Activated naive CD4-positive, alpha-beta T cell treated with anti-CD3 and anti-CD28 coated beads for 36 hours (primary cell): ENCODE measurements at regions of chr22 and their contacts with region 1.

Region 1: DNA sequence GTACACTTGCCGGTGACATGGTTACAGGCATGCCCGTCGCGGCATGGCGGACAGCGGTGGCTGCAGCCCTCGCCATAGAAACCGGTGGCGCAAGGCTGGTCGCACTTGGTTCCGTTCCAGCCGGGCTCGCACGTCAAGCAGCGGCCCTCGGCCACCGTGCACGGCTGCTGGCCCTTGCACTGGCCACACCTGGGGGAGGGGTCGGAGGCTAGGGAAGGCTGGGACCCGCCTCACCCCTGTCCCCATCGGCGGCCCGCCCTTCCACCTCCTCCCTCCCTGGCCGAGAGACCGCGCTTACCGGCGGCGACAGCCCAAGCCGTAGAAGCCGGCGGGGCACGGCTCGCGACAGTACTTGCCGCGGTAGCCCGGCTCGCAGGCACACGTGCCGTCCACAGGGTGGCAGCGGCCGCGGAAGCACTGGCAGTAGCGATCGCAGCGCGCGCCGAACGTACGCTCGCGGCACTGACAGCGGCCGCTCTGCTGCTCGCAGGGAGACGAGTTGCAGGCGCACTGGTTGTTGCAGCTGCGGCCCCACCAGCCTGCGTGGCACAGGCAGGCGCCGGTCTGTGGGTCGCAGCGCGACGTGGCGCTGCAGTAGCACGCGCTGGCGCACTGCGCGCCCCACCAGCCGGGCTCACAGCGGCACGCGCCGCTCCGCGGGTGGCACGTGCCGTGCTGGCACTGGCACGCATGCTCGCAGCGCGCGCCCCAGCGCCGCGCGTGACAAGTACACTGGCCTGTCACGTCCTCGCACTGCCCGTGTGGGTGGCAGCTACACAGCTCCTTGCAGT is 6.7 kb downstream of the SCARF2 start:
- DNase-seq: peak; percentile 59
- H3K4me3 Mint-ChIP-seq: peak overlapping the region; percentile 63
- H3K27ac Mint-ChIP-seq: no peak overlapping the region
- H3K4me1 Mint-ChIP-seq: peaks cover 18% of the 10 kb centered on the region
- H3K27me3 Mint-ChIP-seq: peaks cover 58% of the 10 kb centered on the region

Region 2: GRCh38 chr22:20408891-20409290 is 22.0 kb before region 1 on chr22:
- CTCF ChIA-PET with region 1: no interaction called
- intact Hi-C with region 1: no loop called
- DNase-seq: no peak
- H3K4me3 Mint-ChIP-seq: no peak overlapping the region
- H3K27ac Mint-ChIP-seq: no peak overlapping the region
- H3K4me1 Mint-ChIP-seq: no peaks in the 10 kb centered on the region
- H3K27me3 Mint-ChIP-seq: no peaks in the 10 kb centered on the region

Region 3: DNA sequence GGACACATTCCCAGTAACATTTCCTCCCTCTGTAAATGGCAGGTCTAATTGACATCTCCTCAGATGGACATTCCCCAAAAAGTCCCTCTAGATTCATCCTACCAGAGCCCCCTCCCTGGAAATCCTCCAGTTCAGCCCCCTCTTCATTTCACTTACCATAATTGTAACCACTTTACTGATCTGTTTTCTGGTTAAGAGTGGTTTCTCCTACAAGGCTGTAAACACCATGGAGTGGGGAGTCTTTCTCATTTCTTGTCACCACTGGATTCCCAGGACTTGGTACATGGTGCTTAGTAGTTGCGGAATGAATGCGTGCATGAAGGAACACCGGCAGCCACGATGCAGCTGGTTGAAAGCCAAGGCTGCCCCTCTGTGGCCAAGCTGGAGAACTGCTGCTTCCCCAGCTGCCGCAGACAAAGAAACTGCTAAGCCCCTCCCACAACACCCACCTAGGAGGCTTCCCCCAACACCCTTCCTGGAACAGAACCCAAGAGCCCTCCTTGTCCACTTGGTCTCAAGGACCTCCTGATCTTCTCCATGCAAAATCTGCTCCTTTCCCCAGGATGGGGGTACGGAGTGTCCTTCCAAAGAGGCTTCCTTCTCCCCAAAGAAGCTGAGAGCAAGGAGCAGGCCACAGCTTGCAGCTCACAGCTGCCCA is 25.3 kb after region 1 on chr22:
- CTCF ChIA-PET with region 1: interaction called, 3 read pairs
- intact Hi-C with region 1: loop called (anchors 1 kb)
- DNase-seq: peak; percentile 84
- H3K4me3 Mint-ChIP-seq: no peak overlapping the region
- H3K27ac Mint-ChIP-seq: no peak overlapping the region
- H3K4me1 Mint-ChIP-seq: peaks cover 23% of the 10 kb centered on the region
- H3K27me3 Mint-ChIP-seq: no peaks in the 10 kb centered on the region

Region 4: DNA sequence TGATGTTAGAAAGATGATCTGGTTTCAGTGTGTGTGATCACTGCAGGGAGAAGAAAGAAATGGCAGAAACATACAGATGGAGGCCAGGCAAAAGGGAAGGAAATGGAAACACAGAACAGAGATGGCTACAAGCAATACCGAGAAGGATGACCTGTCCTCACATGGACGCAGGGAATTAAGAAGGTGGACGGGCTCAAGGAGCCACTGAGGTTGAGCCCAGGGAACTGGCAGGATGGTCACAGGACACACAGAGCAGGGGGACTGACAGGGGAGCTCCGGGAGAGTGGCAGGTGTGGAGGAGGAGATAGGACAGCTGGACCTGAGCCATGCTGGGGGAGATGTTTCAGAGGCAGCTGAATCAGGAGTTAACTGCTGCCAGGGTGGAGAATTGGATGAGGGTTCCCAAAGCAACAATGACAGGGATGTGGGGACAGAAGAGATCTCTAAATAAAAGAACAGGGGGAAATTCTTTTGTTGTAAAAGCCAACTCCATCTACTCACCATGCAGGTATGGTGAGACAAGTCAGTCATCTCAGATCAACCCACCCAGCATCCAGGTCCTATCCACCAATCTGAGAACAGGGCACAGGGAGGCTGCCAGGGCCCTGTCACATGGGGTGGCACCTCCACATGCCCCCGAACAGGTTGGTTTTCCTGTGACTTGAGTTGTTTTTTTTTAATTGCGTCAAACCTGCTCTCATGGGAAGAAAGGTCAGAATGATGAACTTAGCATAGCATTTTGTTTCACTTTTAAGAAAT is 38.4 kb after region 1 on chr22:
- CTCF ChIA-PET with region 1: no interaction called
- intact Hi-C with region 1: no loop called
- DNase-seq: no peak
- H3K4me3 Mint-ChIP-seq: no peak overlapping the region
- H3K27ac Mint-ChIP-seq: peak overlapping the region; percentile 31
- H3K4me1 Mint-ChIP-seq: peaks cover 49% of the 10 kb centered on the region
- H3K27me3 Mint-ChIP-seq: no peaks in the 10 kb centered on the region